ENCODE measurements at regions of chr9 and their contacts with region 1.

Region 1: GRCh38 chr9:131349881-131350563 is 43.9 kb upstream of the PRRC2B start:
- DNase-seq: peak; percentile 93
- ATAC-seq: peak; percentile 99
- H3K4me3 Mint-ChIP-seq: peak overlapping the region; percentile 11
- H3K27ac Mint-ChIP-seq: peak overlapping the region; percentile 72
- H3K4me1 Mint-ChIP-seq: peaks cover 12% of the 10 kb centered on the region
- H3K27me3 Mint-ChIP-seq: no peaks in the 10 kb centered on the region

Region 2: GRCh38 chr9:131361202-131361833 is 11.3 kb after region 1 on chr9:
- CTCF ChIA-PET with region 1: interaction called, 18 read pairs
- DNase-seq: no peak
- ATAC-seq: no peak
- H3K4me3 Mint-ChIP-seq: no peak overlapping the region
- H3K27ac Mint-ChIP-seq: peak overlapping the region; percentile 65
- H3K4me1 Mint-ChIP-seq: peaks cover 22% of the 10 kb centered on the region
- H3K27me3 Mint-ChIP-seq: no peaks in the 10 kb centered on the region

Region 3: GRCh38 chr9:131366761-131367401 is 16.9 kb after region 1 on chr9:
- CTCF ChIA-PET with region 1: interaction called, 18 read pairs
- DNase-seq: no peak
- ATAC-seq: no peak
- H3K4me3 Mint-ChIP-seq: no peak overlapping the region
- H3K27ac Mint-ChIP-seq: no peak overlapping the region
- H3K4me1 Mint-ChIP-seq: peaks cover 3% of the 10 kb centered on the region
- H3K27me3 Mint-ChIP-seq: no peaks in the 10 kb centered on the region

Region 4: GRCh38 chr9:131407717-131408195 is 57.7 kb after region 1 on chr9:
- CTCF ChIA-PET with region 1: interaction called, 36 read pairs
- DNase-seq: peak; percentile 76
- ATAC-seq: peak; percentile 74
- H3K4me3 Mint-ChIP-seq: peak overlapping the region; percentile 70
- H3K27ac Mint-ChIP-seq: peak overlapping the region; percentile 86
- H3K4me1 Mint-ChIP-seq: peaks cover 89% of the 10 kb centered on the region
- H3K27me3 Mint-ChIP-seq: no peaks in the 10 kb centered on the region

Region 5: GRCh38 chr9:131478421-131478868 is 128.4 kb after region 1 on chr9:
- CTCF ChIA-PET with region 1: interaction called, 19 read pairs
- DNase-seq: peak; percentile 65
- ATAC-seq: no peak
- H3K4me3 Mint-ChIP-seq: no peak overlapping the region
- H3K27ac Mint-ChIP-seq: no peak overlapping the region
- H3K4me1 Mint-ChIP-seq: peaks cover 2% of the 10 kb centered on the region
- H3K27me3 Mint-ChIP-seq: no peaks in the 10 kb centered on the region

Region 6: GRCh38 chr9:131502781-131503625 is 153.0 kb after region 1 on chr9 and contains the start of gene POMT1:
- CTCF ChIA-PET with region 1: interaction called, 12 read pairs
- DNase-seq: peak; percentile 91
- ATAC-seq: peak; percentile 73
- H3K4me3 Mint-ChIP-seq: peak within 1 kb of the TSS; percentile 87
- H3K27ac Mint-ChIP-seq: peak within 1 kb of the TSS; percentile 84
- H3K4me1 Mint-ChIP-seq: peaks cover 62% of the 10 kb centered on the region
- H3K27me3 Mint-ChIP-seq: no peaks in the 10 kb centered on the region
- total RNA-seq, gene POMT1: 41.5 to 53.7 TPM

Region 7: DNA sequence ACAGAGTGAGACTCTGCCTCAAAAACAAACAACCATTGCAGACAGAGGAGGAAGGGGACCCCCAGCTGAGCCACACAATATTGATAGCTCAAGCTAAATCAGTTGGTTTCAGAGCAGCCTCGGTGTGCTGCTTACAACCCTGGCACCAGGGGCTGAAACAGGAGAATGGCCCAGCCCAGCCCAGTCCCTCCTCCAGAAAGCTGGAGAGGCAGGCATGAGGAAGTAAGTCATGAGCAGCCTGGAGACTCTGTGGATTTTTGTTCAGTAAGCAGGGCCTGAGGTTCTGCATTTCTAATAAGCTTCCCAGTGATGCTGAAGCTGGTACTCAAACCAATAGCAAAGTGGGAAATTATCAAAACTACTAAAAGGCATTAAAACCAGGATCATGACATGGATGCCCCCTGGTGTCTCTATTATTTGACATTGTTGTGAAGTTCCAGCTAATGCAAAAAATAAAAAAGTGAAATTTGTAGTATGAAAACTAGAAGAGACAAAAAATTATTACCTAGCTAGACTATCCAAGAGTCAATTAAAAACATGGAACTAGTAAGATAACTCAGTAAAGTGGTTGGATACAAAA is 209.5 kb after region 1 on chr9:
- CTCF ChIA-PET with region 1: interaction called, 20 read pairs
- DNase-seq: no peak
- ATAC-seq: no peak
- H3K4me3 Mint-ChIP-seq: no peak overlapping the region
- H3K27ac Mint-ChIP-seq: no peak overlapping the region
- H3K4me1 Mint-ChIP-seq: no peaks in the 10 kb centered on the region
- H3K27me3 Mint-ChIP-seq: peaks cover 17% of the 10 kb centered on the region

Measured in activated CD8-positive, alpha-beta memory T cell treated with anti-CD3 and anti-CD28 coated beads, Interleukin-2, amount 10 ng/mL, durations not matched to agents 7 days and 5 days (primary cell).